CD4-positive, alpha-beta memory T cell (primary cell): ENCODE measurements at regions of chr10 and their contacts with region 1.

Region 1: DNA sequence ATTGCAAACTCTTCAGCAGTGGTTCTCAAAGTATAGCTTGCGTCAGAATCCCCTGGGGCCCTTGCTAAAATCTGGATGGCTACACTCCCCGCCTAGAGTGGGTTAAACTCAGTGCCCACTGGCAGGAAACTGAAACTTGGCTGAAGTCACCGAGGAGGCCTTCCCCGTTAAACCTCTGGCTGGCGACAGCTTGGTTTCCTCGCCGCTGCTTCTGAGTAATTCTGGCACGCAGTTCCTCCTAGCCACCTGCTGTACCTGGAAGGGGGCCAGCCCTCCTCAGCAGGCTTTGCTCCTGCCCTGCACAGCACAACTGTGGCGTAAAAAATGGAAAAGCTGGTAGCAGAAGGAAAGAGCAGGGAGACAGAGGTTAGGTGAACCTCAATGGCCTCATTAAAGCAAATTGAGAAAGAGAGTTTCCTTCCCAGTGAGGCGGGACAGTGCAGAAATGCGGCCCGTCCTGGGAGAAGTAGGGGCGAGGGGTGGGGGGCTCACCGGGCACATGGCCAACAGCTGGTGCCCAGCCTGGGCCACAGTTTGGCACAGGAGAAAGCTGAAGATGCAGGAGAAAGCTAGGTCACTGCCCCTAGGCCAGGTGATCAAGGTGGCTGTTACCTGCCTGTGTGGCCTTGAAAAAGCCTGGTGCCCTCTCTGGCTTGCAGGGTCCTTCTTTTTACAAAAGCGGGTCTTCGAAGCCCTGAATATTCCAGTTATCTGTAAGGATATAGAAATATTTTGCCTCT is 46.6 kb downstream of the ALOX5 start:
- DNase-seq: peak; percentile 48 to 79 (median 54)
- H3K4me3 ChIP-seq: peak overlapping the region; percentile 32 to 39
- H3K4me3 Mint-ChIP-seq: peak overlapping the region; percentile 89 to 95 (median 92)
- H3K27ac ChIP-seq: peak overlapping the region; percentile 82
- H3K27ac Mint-ChIP-seq: peak overlapping the region; percentile 89 to 97 (median 97)
- H3K4me1 ChIP-seq: peaks cover 72% of the 10 kb centered on the region
- H3K4me1 Mint-ChIP-seq: peaks cover 41 to 82% (median 63%) of the 10 kb centered on the region in 4 donors
- H3K27me3 ChIP-seq: no peaks in the 10 kb centered on the region
- H3K27me3 Mint-ChIP-seq: no peaks in the 10 kb centered on the region

Region 2: GRCh38 chr10:45373576-45374349 is 46.9 kb before region 1 on chr10 and contains the start of gene ALOX5:
- CTCF ChIA-PET with region 1: no interaction called
- POLR2A ChIA-PET with region 1: interaction called, 8 read pairs
- intact Hi-C with region 1: loop called (anchors 2 kb)
- DNase-seq: peak in 4 of 5 donors; percentile 16 to 38 (median 29)
- H3K4me3 ChIP-seq: peak within 1 kb of the TSS; percentile 21 to 38
- H3K4me3 Mint-ChIP-seq: peak within 1 kb of the TSS; percentile 84 to 92 (median 87)
- H3K27ac ChIP-seq: no peak within 1 kb of the TSS
- H3K27ac Mint-ChIP-seq: peak within 1 kb of the TSS in 5 of 7 donors; percentile 9 to 77 (median 61)
- H3K4me1 ChIP-seq: peaks cover 20% of the 10 kb centered on the region
- H3K4me1 Mint-ChIP-seq: peaks cover 11 to 28% (median 20%) of the 10 kb centered on the region in 4 donors
- H3K27me3 ChIP-seq: peaks cover 4% of the 10 kb centered on the region
- H3K27me3 Mint-ChIP-seq: peaks cover 10 to 13% of the 10 kb centered on the region in 2 donors
- total RNA-seq, gene ALOX5: 3.1 to 3.3 TPM